Caco-2 (cell line): ENCODE measurements at regions of chr7 and their contacts with region 1.

Region 1: DNA sequence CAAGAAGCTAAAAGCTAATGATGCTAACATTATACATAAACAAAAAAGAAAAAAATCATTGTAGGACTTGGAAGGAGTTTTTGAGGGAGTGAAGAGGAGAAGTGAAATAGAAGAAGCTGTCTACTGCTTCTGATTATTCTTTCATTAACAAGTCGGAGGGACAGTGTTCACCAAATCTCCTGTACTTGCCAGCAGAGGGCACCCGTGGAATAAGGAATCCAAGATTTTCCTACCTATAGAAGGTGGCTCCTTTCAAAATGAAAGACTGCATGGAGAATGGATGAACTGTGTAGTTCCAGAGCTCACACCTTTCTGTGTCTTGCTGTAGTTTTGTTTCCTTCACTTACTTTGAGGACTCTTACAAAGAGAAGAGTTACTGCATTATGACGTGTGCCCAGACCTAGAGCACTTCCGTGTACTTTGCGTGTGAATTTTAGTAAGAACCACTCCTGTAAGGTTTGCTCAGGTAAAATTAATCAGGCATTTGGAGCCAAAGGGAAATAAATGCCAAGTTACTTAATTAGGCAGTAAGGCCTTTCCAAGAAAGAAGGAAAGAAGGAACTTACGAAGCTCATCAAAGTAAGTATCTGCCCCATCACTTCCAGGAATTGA is 145.1 kb downstream of the SEMA3D start:
- DNase-seq: peak; percentile 73 to 77
- H3K4me3 ChIP-seq: no peak overlapping the region
- H3K4me3 Mint-ChIP-seq: no peak overlapping the region
- H3K27ac Mint-ChIP-seq: no peak overlapping the region
- H3K4me1 ChIP-seq: 0 out of 2 replicates have a peak, but pooled peaks cover 6% of the 10 kb centered on the region
- H3K4me1 Mint-ChIP-seq: no peaks in the 10 kb centered on the region
- H3K27me3 ChIP-seq: no peaks in the 10 kb centered on the region
- H3K27me3 Mint-ChIP-seq: no peaks in the 10 kb centered on the region
- CTCF ChIP-seq: peak; percentile 82 to 85

Region 2: DNA sequence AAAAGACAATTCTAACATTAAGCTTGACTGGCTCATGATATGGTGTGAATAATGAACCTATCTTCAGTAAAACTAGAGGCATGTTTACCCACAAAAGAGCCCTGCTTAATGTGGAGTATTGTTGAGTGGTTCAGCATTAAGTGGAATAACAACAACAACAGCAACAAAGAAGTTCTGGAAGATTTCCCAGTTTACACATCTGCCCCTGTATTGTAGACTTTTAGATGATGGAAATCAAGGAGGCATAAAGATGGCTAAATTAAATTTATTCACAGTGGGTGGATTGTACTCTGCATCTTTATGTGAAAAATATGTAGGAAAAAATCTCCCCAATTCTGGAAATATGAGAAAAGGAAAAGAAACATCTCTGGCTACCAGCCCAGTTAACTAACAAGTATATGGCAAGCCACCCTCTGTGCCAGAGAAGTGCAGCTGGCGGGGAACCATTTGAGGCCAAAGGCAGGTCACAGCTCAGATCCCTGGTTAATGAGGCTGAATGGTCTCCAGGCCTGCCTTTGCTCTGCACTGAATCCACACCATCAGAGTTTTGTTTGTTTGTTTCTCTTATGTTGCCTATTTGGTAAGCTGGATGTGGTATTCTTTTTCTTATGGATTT is 40.9 kb before region 1 on chr7:
- CTCF ChIA-PET with region 1: no interaction called
- POLR2A ChIA-PET with region 1: no interaction called
- intact Hi-C with region 1: no loop called
- DNase-seq: no peak
- H3K4me3 ChIP-seq: no peak overlapping the region
- H3K4me3 Mint-ChIP-seq: no peak overlapping the region
- H3K27ac Mint-ChIP-seq: no peak overlapping the region
- H3K4me1 ChIP-seq: no peaks in the 10 kb centered on the region
- H3K4me1 Mint-ChIP-seq: no peaks in the 10 kb centered on the region
- H3K27me3 ChIP-seq: no peaks in the 10 kb centered on the region
- H3K27me3 Mint-ChIP-seq: no peaks in the 10 kb centered on the region
- CTCF ChIP-seq: no peak

Region 3: DNA sequence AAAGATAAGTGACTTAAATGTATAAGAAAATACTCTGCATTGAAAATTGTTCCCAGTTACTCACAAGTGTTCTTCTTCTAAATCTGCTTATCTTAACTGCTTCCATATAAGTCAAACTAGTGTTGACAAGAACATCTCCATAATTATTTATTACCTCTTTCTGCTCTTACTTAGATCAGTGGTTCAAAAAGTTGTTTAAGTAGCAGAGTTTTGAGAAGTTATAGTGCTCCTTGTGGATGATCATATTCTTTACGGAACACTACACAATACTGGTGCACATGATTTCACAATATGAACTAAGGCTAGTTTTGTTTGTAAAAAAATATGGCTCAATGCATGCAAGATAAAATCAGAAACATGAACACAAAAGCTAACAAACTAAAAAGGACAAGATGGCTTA is 23.2 kb before region 1 on chr7:
- CTCF ChIA-PET with region 1: no interaction called
- POLR2A ChIA-PET with region 1: no interaction called
- intact Hi-C with region 1: no loop called
- DNase-seq: no peak
- H3K4me3 ChIP-seq: no peak overlapping the region
- H3K4me3 Mint-ChIP-seq: no peak overlapping the region
- H3K27ac Mint-ChIP-seq: no peak overlapping the region
- H3K4me1 ChIP-seq: no peaks in the 10 kb centered on the region
- H3K4me1 Mint-ChIP-seq: no peaks in the 10 kb centered on the region
- H3K27me3 ChIP-seq: no peaks in the 10 kb centered on the region
- H3K27me3 Mint-ChIP-seq: peaks cover 4% of the 10 kb centered on the region
- CTCF ChIP-seq: no peak

Region 4: DNA sequence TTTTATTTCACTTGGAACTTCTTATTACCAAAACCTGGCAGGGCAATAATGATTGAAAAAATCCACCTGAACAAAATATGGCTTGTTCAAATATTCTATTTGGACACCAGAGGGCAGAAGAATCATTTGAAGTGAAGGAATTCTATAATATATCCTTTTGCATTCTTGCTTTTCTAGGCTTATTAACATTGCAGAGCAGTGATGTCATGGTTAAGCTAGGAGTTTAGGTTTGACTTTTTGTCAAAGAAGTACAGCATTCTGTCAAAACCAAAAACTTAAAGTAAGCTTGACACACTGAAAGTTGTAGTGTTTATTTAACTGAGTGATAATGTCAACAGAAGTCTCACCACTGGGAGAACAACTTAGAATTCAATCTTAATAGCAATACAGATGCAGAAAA is 10.8 kb before region 1 on chr7:
- CTCF ChIA-PET with region 1: no interaction called
- POLR2A ChIA-PET with region 1: no interaction called
- intact Hi-C with region 1: no loop called
- DNase-seq: peak in 1 of 2 experiments; percentile 26
- H3K4me3 ChIP-seq: no peak overlapping the region
- H3K4me3 Mint-ChIP-seq: no peak overlapping the region
- H3K27ac Mint-ChIP-seq: no peak overlapping the region
- H3K4me1 ChIP-seq: peaks cover 7% of the 10 kb centered on the region; the same call in 1 of the 2 replicates
- H3K4me1 Mint-ChIP-seq: no peaks in the 10 kb centered on the region
- H3K27me3 ChIP-seq: no peaks in the 10 kb centered on the region
- H3K27me3 Mint-ChIP-seq: peaks cover 4% of the 10 kb centered on the region
- CTCF ChIP-seq: peak; percentile 29 to 65

Region 5: GRCh38 chr7:85186521-85187241 is 145.0 kb after region 1 on chr7 and contains the start of gene SEMA3D:
- CTCF ChIA-PET with region 1: no interaction called
- POLR2A ChIA-PET with region 1: no interaction called
- intact Hi-C with region 1: loop called (anchors 1 kb)
- DNase-seq: peak; percentile 33 to 56
- H3K4me3 ChIP-seq: peak within 1 kb of the TSS; percentile 21; the same call in 1 of the 2 replicates
- H3K4me3 Mint-ChIP-seq: peak within 1 kb of the TSS; percentile 64
- H3K27ac Mint-ChIP-seq: no peak within 1 kb of the TSS
- H3K4me1 ChIP-seq: no peaks in the 10 kb centered on the region
- H3K4me1 Mint-ChIP-seq: no peaks in the 10 kb centered on the region
- H3K27me3 ChIP-seq: no peaks in the 10 kb centered on the region
- H3K27me3 Mint-ChIP-seq: no peaks in the 10 kb centered on the region
- CTCF ChIP-seq: peak; percentile 26 to 35
- total RNA-seq, gene SEMA3D: 0.61 and 0.84 TPM in 2 replicates

Region 6: GRCh38 chr7:85454904-85455303 is 413.2 kb after region 1 on chr7:
- CTCF ChIA-PET with region 1: no interaction called
- POLR2A ChIA-PET with region 1: no interaction called
- intact Hi-C with region 1: loop called (anchors 1 kb)
- DNase-seq: no peak
- H3K4me3 ChIP-seq: no peak overlapping the region
- H3K4me3 Mint-ChIP-seq: no peak overlapping the region
- H3K27ac Mint-ChIP-seq: no peak overlapping the region
- H3K4me1 ChIP-seq: no peaks in the 10 kb centered on the region
- H3K4me1 Mint-ChIP-seq: no peaks in the 10 kb centered on the region
- H3K27me3 ChIP-seq: no peaks in the 10 kb centered on the region
- H3K27me3 Mint-ChIP-seq: no peaks in the 10 kb centered on the region
- CTCF ChIP-seq: no peak

Region 7: GRCh38 chr7:85554236-85555178 is 512.8 kb after region 1 on chr7:
- CTCF ChIA-PET with region 1: no interaction called
- POLR2A ChIA-PET with region 1: no interaction called
- intact Hi-C with region 1: loop called (anchors 1 kb)
- DNase-seq: peak; percentile 30 to 56
- H3K4me3 ChIP-seq: no peak overlapping the region
- H3K4me3 Mint-ChIP-seq: no peak overlapping the region
- H3K27ac Mint-ChIP-seq: no peak overlapping the region
- H3K4me1 ChIP-seq: no peaks in the 10 kb centered on the region
- H3K4me1 Mint-ChIP-seq: no peaks in the 10 kb centered on the region
- H3K27me3 ChIP-seq: no peaks in the 10 kb centered on the region
- H3K27me3 Mint-ChIP-seq: no peaks in the 10 kb centered on the region
- CTCF ChIP-seq: peak; percentile 63 to 73

Region 8: GRCh38 chr7:85829817-85830432 is 788.2 kb after region 1 on chr7:
- CTCF ChIA-PET with region 1: interaction called, 11 read pairs
- POLR2A ChIA-PET with region 1: no interaction called
- intact Hi-C with region 1: loop called (anchors 1 kb)
- DNase-seq: peak in 1 of 2 experiments; percentile 25
- H3K4me3 ChIP-seq: no peak overlapping the region
- H3K4me3 Mint-ChIP-seq: no peak overlapping the region
- H3K27ac Mint-ChIP-seq: no peak overlapping the region
- H3K4me1 ChIP-seq: no peaks in the 10 kb centered on the region
- H3K4me1 Mint-ChIP-seq: peaks cover 7% of the 10 kb centered on the region
- H3K27me3 ChIP-seq: no peaks in the 10 kb centered on the region; the same call in 1 of the 2 replicates
- H3K27me3 Mint-ChIP-seq: no peaks in the 10 kb centered on the region
- CTCF ChIP-seq: peak; percentile 30 to 48